Cardiac septum (tissue), 1 donor: ENCODE measurements at regions of chr12 and their contacts with region 1.

Region 1: DNA sequence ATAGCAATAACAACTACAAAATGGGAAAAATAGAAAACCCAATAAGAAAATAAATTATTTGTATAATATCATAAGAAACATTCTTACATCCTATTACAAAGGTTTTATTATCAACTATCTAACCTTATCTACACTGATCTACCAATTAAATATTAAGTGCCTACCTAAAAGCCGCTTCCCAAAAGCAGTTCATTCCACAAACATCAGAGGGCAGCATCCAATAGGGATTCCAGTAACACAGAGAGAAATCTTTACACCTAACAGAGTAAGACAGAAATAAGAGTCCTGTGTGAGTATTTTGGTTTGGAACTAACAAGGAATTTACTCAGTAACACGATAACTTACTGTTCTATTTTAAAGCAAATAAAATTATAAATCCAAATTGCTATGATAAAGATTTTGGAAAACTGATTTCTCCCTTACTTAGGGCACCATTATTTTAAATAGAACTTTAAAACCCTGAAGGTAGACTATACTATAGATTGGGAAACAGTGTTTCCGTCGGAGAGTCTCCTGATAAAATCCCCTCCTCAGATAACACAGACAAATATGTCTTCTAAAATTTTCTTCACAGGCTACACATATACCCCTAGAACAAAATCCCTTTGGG is 15.0 kb downstream of the GXYLT1 start:
- DNase-seq: no peak

Region 2: GRCh38 chr12:41917855-41918460 is 211.7 kb before region 1 on chr12:
- intact Hi-C with region 1: no loop called
- DNase-seq: no peak

Region 3: DNA sequence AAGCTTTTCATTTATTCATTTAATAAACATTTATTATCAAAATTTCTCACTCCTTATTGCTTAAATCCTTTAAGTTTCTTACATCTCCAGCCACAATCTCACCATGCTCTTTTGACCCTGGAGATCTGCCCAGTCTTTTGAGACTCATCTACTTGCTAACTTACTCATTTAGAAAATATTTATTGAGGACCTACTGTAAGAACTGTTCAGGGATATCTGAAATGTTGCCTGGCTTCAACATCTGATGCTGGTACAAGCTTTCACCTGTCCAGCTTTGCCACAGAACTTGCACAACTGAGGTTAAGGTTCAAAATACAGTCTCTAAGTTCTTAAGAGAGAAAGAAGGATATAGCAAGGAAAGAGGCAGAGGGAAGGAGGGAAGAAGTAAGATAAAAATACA is 32.5 kb after region 1 on chr12:
- intact Hi-C with region 1: no loop called
- DNase-seq: no peak

Region 4: GRCh38 chr12:42332301-42333285 is 202.9 kb after region 1 on chr12:
- intact Hi-C with region 1: loop called (anchors 2 kb)
- DNase-seq: no peak

Region 5: GRCh38 chr12:42372154-42372791 is 242.6 kb after region 1 on chr12:
- intact Hi-C with region 1: loop called (anchors 2 kb)
- DNase-seq: no peak

Region 6: GRCh38 chr12:42421844-42422779 is 292.4 kb after region 1 on chr12:
- intact Hi-C with region 1: no loop called
- DNase-seq: no peak

Region 7: DNA sequence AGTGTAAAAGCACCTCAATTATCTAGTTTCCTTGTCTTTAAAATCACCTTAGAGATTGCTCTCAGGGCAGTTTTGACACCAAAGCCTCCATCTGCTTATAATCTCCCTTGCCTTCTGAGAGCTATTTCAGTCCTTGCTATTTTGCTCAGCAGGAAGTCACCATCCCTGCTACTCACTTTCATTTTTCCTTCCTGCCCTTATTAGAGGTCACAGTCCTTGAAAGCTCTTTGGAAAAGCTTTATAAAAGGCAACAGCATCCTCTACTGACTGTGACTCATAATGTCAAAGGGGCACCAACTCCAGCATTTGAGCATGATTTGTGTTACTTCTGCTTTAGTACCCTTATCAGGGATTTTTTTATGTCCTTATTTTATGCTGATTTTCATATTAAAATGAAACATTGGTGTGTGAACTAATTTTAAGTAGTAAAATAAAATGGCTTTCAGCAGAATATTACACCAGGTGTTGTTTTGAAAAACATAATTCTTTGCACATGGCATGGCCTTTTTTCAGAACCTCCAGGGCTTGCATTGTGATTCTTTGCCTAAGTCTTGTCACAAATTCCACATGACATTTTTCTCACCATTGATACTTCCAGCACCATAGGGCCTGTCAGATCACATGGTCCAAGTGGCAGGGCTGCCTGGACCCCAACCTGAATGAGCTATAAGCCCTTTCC is 1209.3 kb after region 1 on chr12:
- intact Hi-C with region 1: loop called (anchors 10 kb)
- DNase-seq: no peak